ENCODE measurements at regions of chr2 and their contacts with region 1.

Region 1: DNA sequence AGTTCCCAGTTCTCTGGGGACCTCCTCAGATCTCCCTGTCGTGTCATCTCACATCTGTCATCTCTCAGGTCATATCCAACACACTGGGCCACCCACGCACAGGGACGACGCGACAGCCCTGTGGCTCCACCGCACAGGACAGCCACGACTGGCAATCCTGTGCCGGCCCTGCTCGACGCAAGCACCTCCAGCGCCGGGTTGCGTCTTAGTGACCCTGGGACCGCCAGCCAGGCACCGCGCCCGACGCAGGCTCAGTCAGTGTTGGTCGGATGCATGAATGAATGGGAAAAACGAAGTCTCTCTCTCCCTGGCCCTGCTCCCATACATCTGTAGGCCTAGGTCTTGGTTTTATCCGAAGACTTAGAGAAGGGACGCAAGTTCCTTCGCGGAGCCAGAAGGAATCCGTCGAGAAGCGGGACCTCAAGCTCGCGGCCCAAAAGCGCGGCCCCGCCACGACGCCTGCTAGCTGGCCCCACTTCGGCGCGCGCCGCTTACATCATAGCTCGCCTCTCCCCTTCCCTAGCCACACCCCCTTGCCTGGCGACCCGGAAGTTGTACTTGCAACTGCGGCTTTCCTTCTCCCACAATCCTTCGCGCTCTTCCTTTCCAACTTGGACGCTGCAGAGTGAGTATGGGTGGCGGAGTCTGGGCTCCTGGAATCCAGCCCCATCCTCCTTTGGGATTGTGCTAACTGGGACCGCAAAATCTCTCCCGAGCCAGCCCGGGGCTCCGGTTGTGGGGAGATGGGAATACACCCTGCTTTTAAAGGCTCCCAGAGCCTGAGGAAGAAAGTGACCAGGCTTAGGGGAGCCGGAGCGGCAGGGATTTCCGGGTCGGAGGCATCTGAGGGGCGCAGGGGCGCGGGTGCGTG is at the start of gene RPL31:
- DNase-seq: peak; percentile 86 to 97 (median 95)
- ATAC-seq: peak; percentile 99
- H3K4me3 ChIP-seq: peak within 1 kb of the TSS; percentile 93
- H3K4me3 Mint-ChIP-seq: peak within 1 kb of the TSS; percentile 91 to 99 (median 95)
- H3K27ac ChIP-seq: peak within 1 kb of the TSS; percentile 86
- H3K27ac Mint-ChIP-seq: peak within 1 kb of the TSS; percentile 88 to 99 (median 98)
- H3K4me1 ChIP-seq: peaks cover 16 to 18% of the 10 kb centered on the region in 2 donors
- H3K4me1 Mint-ChIP-seq: peaks cover 32 to 48% (median 44%) of the 10 kb centered on the region in 7 donors
- H3K27me3 ChIP-seq: no peaks in the 10 kb centered on the region
- H3K27me3 Mint-ChIP-seq: peaks cover 0 to 5% (median 0%) of the 10 kb centered on the region in 5 donors
- total RNA-seq, gene RPL31: 1,182 to 2,835 (median 2,548) TPM

Region 2: GRCh38 chr2:100416935-100417710 is 584.8 kb before region 1 on chr2 and contains the start of gene CHST10:
- CTCF ChIA-PET with region 1: no interaction called
- POLR2A ChIA-PET with region 1: interaction called, 3 read pairs
- intact Hi-C with region 1: loop called (anchors 2 to 5 kb)
- DNase-seq: peak; percentile 9 to 67 (median 38)
- ATAC-seq: peak; percentile 87
- H3K4me3 ChIP-seq: peak within 1 kb of the TSS; percentile 76
- H3K4me3 Mint-ChIP-seq: peak within 1 kb of the TSS; percentile 78 to 95 (median 88)
- H3K27ac ChIP-seq: peak within 1 kb of the TSS; percentile 47
- H3K27ac Mint-ChIP-seq: peak within 1 kb of the TSS in 6 of 9 donors; percentile 26 to 63 (median 52)
- H3K4me1 ChIP-seq: no peaks in the 10 kb centered on the region
- H3K4me1 Mint-ChIP-seq: peaks cover 8 to 22% (median 17%) of the 10 kb centered on the region in 7 donors
- H3K27me3 ChIP-seq: no peaks in the 10 kb centered on the region
- H3K27me3 Mint-ChIP-seq: peaks cover 0 to 15% (median 0%) of the 10 kb centered on the region in 5 donors
- total RNA-seq, gene CHST10: 2.2 to 5.0 (median 3.2) TPM

Region 3: DNA sequence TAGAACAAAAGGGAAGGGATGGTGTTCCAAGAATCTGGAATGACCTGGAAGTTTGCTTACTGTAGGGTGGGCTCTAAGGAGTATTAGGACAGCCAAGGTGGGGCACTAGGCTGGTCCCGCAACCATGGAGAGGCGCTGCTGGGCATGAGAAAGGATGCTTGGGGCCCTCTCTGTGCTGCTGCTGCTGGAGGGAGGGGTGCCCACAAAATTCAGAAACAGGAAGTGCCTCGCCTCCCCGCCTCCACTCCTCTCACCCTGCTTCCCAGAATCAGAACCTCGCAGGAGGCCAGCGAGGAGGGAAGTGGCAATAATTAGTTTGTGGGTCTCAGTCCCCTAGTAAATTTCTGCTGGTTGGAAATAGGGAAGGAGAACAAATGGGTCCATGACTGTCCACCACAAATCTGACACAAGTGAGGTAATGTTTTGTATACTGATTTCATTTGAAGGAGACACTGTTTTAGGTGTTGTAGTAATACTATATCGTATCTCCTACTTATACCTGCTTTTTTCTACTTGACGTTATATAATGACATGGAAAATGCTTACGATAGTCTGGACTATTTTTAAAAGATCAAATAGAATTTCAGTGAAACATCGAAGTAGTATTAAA is 447.0 kb before region 1 on chr2:
- CTCF ChIA-PET with region 1: no interaction called
- POLR2A ChIA-PET with region 1: no interaction called
- intact Hi-C with region 1: loop called in 1 of 2 experiments (anchors 2 kb)
- DNase-seq: peak; percentile 13 to 43 (median 34)
- ATAC-seq: peak; percentile 80
- H3K4me3 ChIP-seq: peak overlapping the region; percentile 49
- H3K4me3 Mint-ChIP-seq: peak overlapping the region; percentile 67 to 81 (median 76)
- H3K27ac ChIP-seq: peak overlapping the region; percentile 61
- H3K27ac Mint-ChIP-seq: peak overlapping the region; percentile 72 to 94 (median 90)
- H3K4me1 ChIP-seq: peaks cover 10 to 16% of the 10 kb centered on the region in 2 donors
- H3K4me1 Mint-ChIP-seq: peaks cover 20 to 41% (median 30%) of the 10 kb centered on the region in 7 donors
- H3K27me3 ChIP-seq: no peaks in the 10 kb centered on the region
- H3K27me3 Mint-ChIP-seq: peaks cover 0 to 2% (median 0%) of the 10 kb centered on the region in 5 donors

Region 4: GRCh38 chr2:100562732-100563720 is 438.9 kb before region 1 on chr2 and contains the start of gene PDCL3:
- CTCF ChIA-PET with region 1: no interaction called
- POLR2A ChIA-PET with region 1: interaction called, 22 read pairs
- intact Hi-C with region 1: loop called (anchors 1 kb)
- DNase-seq: peak; percentile 91 to 97 (median 96)
- ATAC-seq: peak; percentile 94
- H3K4me3 ChIP-seq: peak within 1 kb of the TSS; percentile 99
- H3K4me3 Mint-ChIP-seq: peak within 1 kb of the TSS; percentile 85 to 100 (median 97)
- H3K27ac ChIP-seq: peak within 1 kb of the TSS; percentile 78
- H3K27ac Mint-ChIP-seq: peak within 1 kb of the TSS; percentile 97 to 99 (median 99)
- H3K4me1 ChIP-seq: peaks cover 15 to 16% of the 10 kb centered on the region in 2 donors
- H3K4me1 Mint-ChIP-seq: peaks cover 14 to 64% (median 52%) of the 10 kb centered on the region in 7 donors
- H3K27me3 ChIP-seq: no peaks in the 10 kb centered on the region
- H3K27me3 Mint-ChIP-seq: peaks cover 0 to 2% (median 0%) of the 10 kb centered on the region in 5 donors
- total RNA-seq, gene PDCL3: 16.6 to 31.9 (median 19.9) TPM

Region 5: GRCh38 chr2:100580367-100581276 is 421.3 kb before region 1 on chr2:
- CTCF ChIA-PET with region 1: no interaction called
- POLR2A ChIA-PET with region 1: interaction called, 10 read pairs
- intact Hi-C with region 1: no loop called
- DNase-seq: peak; percentile 43 to 83 (median 80)
- ATAC-seq: peak; percentile 89
- H3K4me3 ChIP-seq: peak overlapping the region; percentile 45
- H3K4me3 Mint-ChIP-seq: peak overlapping the region; percentile 33 to 81 (median 62)
- H3K27ac ChIP-seq: peak overlapping the region; percentile 91
- H3K27ac Mint-ChIP-seq: peak overlapping the region; percentile 86 to 99 (median 94)
- H3K4me1 ChIP-seq: peaks cover 31 to 37% of the 10 kb centered on the region in 2 donors
- H3K4me1 Mint-ChIP-seq: peaks cover 24 to 50% (median 42%) of the 10 kb centered on the region in 7 donors
- H3K27me3 ChIP-seq: no peaks in the 10 kb centered on the region
- H3K27me3 Mint-ChIP-seq: no peaks in the 10 kb centered on the region

Region 6: GRCh38 chr2:101012706-101013181 is 10.8 kb after region 1 on chr2:
- CTCF ChIA-PET with region 1: interaction called, 8 read pairs
- POLR2A ChIA-PET with region 1: interaction called, 11 read pairs
- intact Hi-C with region 1: no loop called
- DNase-seq: peak in 7 of 9 donors; percentile 16 to 51 (median 38)
- ATAC-seq: no peak
- H3K4me3 ChIP-seq: no peak overlapping the region
- H3K4me3 Mint-ChIP-seq: no peak overlapping the region
- H3K27ac ChIP-seq: no peak overlapping the region
- H3K27ac Mint-ChIP-seq: no peak overlapping the region
- H3K4me1 ChIP-seq: no peaks in the 10 kb centered on the region
- H3K4me1 Mint-ChIP-seq: peaks cover 6 to 28% (median 12%) of the 10 kb centered on the region in 7 donors
- H3K27me3 ChIP-seq: no peaks in the 10 kb centered on the region
- H3K27me3 Mint-ChIP-seq: no peaks in the 10 kb centered on the region